SK-N-SH (cell line): ENCODE measurements at regions of chr2 and their contacts with region 1.

Region 1: GRCh38 chr2:26521054-26521912 is 43.4 kb upstream of the OTOF start:
- DNase-seq: peak; percentile 65
- H3K4me3 ChIP-seq: no peak overlapping the region
- H3K27ac ChIP-seq: no peak overlapping the region
- H3K4me1 ChIP-seq: peaks cover 6 to 7% of the 10 kb centered on the region in 2 experiments; a peak in 2 of 4 replicates
- H3K27me3 ChIP-seq: peaks cover 16% of the 10 kb centered on the region
- CTCF ChIP-seq: peak; percentile 46; the same call in 1 of the 2 replicates
- EP300 ChIP-seq: no peak
- RAD21 ChIP-seq: peak; percentile 37; the same call in 1 of the 2 replicates

Region 2: GRCh38 chr2:26542194-26542455 is 20.8 kb after region 1 on chr2:
- CTCF ChIA-PET with region 1: interaction called, 14 read pairs
- POLR2A ChIA-PET with region 1: no interaction called
- DNase-seq: no peak
- H3K4me3 ChIP-seq: no peak overlapping the region
- H3K27ac ChIP-seq: no peak overlapping the region
- H3K4me1 ChIP-seq: no peaks in the 10 kb centered on the region
- H3K27me3 ChIP-seq: peaks cover 5% of the 10 kb centered on the region; the same call in 1 of the 2 replicates
- CTCF ChIP-seq: no peak
- EP300 ChIP-seq: no peak
- RAD21 ChIP-seq: no peak

Region 3: GRCh38 chr2:26561918-26562810 is 40.9 kb after region 1 on chr2:
- CTCF ChIA-PET with region 1: interaction called, 21 read pairs
- POLR2A ChIA-PET with region 1: interaction called, 3 read pairs
- DNase-seq: peak; percentile 99
- H3K4me3 ChIP-seq: peak overlapping the region; percentile 12 to 43; a peak in 3 of 4 replicates
- H3K27ac ChIP-seq: no peak overlapping the region
- H3K4me1 ChIP-seq: peaks cover 0 to 9% of the 10 kb centered on the region in 2 experiments; a peak in 1 of 4 replicates
- H3K27me3 ChIP-seq: peaks cover 85% of the 10 kb centered on the region
- CTCF ChIP-seq: peak; percentile 32; the same call in 1 of the 2 replicates
- EP300 ChIP-seq: no peak
- RAD21 ChIP-seq: peak; percentile 40

Region 4: GRCh38 chr2:26623541-26624396 is 102.5 kb after region 1 on chr2:
- CTCF ChIA-PET with region 1: no interaction called
- POLR2A ChIA-PET with region 1: no interaction called
- DNase-seq: peak; percentile 41
- H3K4me3 ChIP-seq: no peak overlapping the region
- H3K27ac ChIP-seq: no peak overlapping the region
- H3K4me1 ChIP-seq: peaks cover 0 to 3% of the 10 kb centered on the region in 2 experiments; a peak in 1 of 4 replicates
- H3K27me3 ChIP-seq: peaks cover 12% of the 10 kb centered on the region
- CTCF ChIP-seq: no peak
- EP300 ChIP-seq: no peak
- RAD21 ChIP-seq: no peak